Testis (tissue), 5 donors: ENCODE measurements at regions of chr6 and their contacts with region 1.

Region 1: GRCh38 chr6:75208298-75209183 is 2.7 kb upstream of the COL12A1 start:
- DNase-seq: peak; percentile 93
- H3K4me3 ChIP-seq: peak overlapping the region in 1 of 2 donors; percentile 21
- H3K27ac ChIP-seq: no peak overlapping the region
- H3K4me1 ChIP-seq: peaks cover 18% of the 10 kb centered on the region
- H3K27me3 ChIP-seq: no peaks in the 10 kb centered on the region
- CTCF ChIP-seq: peak; percentile 77 to 86 (median 78)
- POLR2A ChIP-seq: no peak

Region 2: GRCh38 chr6:73747289-73747688 is 1461.3 kb before region 1 on chr6:
- intact Hi-C with region 1: loop called (anchors 10 kb)
- DNase-seq: no peak
- H3K4me3 ChIP-seq: no peak overlapping the region
- H3K27ac ChIP-seq: no peak overlapping the region
- H3K4me1 ChIP-seq: no peaks in the 10 kb centered on the region
- H3K27me3 ChIP-seq: no peaks in the 10 kb centered on the region
- CTCF ChIP-seq: no peak
- POLR2A ChIP-seq: no peak

Region 3: GRCh38 chr6:74410630-74411029 is 797.9 kb before region 1 on chr6:
- intact Hi-C with region 1: loop called (anchors 10 kb)
- DNase-seq: no peak
- H3K4me3 ChIP-seq: no peak overlapping the region
- H3K27ac ChIP-seq: no peak overlapping the region
- H3K4me1 ChIP-seq: no peaks in the 10 kb centered on the region
- H3K27me3 ChIP-seq: no peaks in the 10 kb centered on the region
- CTCF ChIP-seq: no peak
- POLR2A ChIP-seq: no peak